Sciatic nerve (tissue), 2 donors: ENCODE measurements at regions of chr14 and their contacts with region 1.

Region 1: GRCh38 chr14:44149597-44149996 is 357.5 kb downstream of the FSCB start:
- DNase-seq: no peak
- ATAC-seq: no peak

Region 2: DNA sequence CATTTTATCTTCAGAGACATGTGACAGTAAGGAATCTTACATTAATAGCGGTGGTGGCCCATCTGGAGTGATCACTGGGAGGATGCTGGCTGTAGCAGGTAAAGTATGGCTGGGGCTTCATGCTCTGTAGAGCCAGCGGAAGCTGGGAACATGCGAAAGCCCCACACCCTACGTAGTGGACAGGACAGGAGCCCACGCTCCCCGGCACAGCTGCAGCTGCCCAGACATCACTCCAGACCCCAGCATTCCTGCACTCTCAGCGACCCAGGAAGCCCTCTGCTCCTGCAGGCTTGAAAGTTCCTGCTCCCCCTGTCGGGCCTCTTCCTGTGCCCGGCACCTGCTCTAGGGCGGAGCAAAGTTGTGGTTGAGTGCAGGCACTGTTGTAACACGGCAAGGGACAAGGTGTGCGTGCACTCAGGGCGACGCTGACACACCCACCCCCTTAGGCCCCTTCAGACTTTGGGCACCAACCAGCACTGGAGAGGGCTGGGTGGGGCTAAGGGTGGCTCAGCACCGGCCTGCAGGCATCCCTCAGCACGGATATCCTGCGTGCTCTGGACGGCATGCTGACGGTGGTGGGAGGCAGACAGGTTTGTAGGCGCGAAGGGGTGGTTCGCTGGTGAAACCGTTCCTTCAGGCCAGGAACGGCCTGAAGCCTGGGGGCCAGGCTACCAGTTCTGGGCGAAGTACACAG is 210.9 kb before region 1 on chr14:
- intact Hi-C with region 1: loop called (anchors 5 kb)
- DNase-seq: no peak
- ATAC-seq: no peak